Calu3 (cell line): ENCODE measurements at regions of chr6 and their contacts with region 1.

Region 1: GRCh38 chr6:107600936-107601335 is 111.0 kb downstream of the SOBP start:
- DNase-seq: peak; percentile 66
- H3K4me3 Mint-ChIP-seq: no peak overlapping the region
- H3K27ac Mint-ChIP-seq: no peak overlapping the region
- H3K4me1 Mint-ChIP-seq: peaks cover 36% of the 10 kb centered on the region
- H3K27me3 Mint-ChIP-seq: no peaks in the 10 kb centered on the region
- CTCF ChIP-seq: no peak

Region 2: DNA sequence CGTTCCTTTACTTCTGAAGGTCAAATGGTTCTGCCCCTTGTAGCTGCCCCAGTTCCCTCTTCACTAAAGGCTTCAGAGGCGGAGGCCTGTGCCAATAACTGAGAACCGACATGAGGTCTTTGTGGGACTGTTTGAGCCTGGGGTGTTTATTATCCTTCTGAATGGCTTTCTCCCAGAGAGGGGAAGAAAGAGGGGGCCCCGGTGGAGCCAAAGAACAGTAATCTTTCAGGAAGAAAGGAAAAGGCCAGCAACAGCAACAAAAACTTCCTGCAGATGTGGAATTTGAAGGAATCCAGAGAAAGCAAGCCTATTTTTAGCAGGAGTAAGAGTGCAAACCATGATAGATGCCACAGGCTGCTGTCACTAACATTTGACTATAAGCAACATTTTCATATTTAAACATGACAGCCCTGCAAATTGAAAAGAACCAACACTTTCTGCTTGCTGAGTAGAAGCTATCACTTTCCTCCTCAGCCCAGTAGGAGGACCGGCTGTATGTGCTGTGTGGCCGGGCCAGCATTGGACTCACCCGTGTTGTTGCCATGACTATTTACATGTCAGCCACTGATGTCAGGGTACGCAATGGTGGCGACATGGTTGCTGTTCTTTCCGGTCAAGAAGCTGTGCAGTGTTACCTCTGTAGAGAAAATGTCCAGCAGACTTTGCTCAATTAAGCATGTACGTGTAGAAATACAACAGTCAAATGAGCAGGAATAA is 10.3 kb after region 1 on chr6:
- CTCF ChIA-PET with region 1: no interaction called
- intact Hi-C with region 1: no loop called
- DNase-seq: no peak
- H3K4me3 Mint-ChIP-seq: no peak overlapping the region
- H3K27ac Mint-ChIP-seq: no peak overlapping the region
- H3K4me1 Mint-ChIP-seq: no peaks in the 10 kb centered on the region
- H3K27me3 Mint-ChIP-seq: no peaks in the 10 kb centered on the region
- CTCF ChIP-seq: no peak

Region 3: DNA sequence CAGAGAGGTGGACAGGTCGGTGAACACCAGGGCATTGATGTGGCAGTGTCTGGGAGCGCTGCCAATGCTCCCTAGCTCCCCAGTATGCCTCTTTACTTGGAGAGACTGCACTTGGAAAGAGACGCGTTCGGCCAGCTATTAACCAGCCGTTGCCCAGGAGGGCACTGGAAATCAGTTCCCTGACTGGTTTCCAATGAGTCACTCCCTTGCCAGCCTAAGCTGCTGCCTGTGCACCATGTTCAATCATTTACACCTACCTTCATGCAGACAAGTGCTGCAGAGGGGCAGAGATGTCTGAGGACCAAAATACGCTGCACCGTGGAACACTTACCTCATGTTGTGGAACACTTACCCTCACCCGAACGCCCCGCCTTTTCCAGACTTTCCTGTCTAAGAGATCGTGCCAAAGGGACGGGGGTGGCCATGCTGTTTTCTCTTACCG is 40.6 kb after region 1 on chr6:
- CTCF ChIA-PET with region 1: no interaction called
- intact Hi-C with region 1: loop called (anchors 2 kb)
- DNase-seq: peak; percentile 65
- H3K4me3 Mint-ChIP-seq: peak overlapping the region; percentile 47
- H3K27ac Mint-ChIP-seq: no peak overlapping the region
- H3K4me1 Mint-ChIP-seq: no peaks in the 10 kb centered on the region
- H3K27me3 Mint-ChIP-seq: no peaks in the 10 kb centered on the region
- CTCF ChIP-seq: no peak

Region 4: GRCh38 chr6:107811591-107812218 is 210.8 kb after region 1 on chr6:
- CTCF ChIA-PET with region 1: no interaction called
- intact Hi-C with region 1: no loop called
- DNase-seq: no peak
- H3K4me3 Mint-ChIP-seq: no peak overlapping the region
- H3K27ac Mint-ChIP-seq: no peak overlapping the region
- H3K4me1 Mint-ChIP-seq: peaks cover 22% of the 10 kb centered on the region
- H3K27me3 Mint-ChIP-seq: peaks cover 51% of the 10 kb centered on the region
- CTCF ChIP-seq: no peak